Activated CD4-positive, alpha-beta memory T cell treated with anti-CD3 and anti-CD28 coated beads for 36 hours (primary cell): ENCODE measurements at regions of chr1 and their contacts with region 1.

Region 1: DNA sequence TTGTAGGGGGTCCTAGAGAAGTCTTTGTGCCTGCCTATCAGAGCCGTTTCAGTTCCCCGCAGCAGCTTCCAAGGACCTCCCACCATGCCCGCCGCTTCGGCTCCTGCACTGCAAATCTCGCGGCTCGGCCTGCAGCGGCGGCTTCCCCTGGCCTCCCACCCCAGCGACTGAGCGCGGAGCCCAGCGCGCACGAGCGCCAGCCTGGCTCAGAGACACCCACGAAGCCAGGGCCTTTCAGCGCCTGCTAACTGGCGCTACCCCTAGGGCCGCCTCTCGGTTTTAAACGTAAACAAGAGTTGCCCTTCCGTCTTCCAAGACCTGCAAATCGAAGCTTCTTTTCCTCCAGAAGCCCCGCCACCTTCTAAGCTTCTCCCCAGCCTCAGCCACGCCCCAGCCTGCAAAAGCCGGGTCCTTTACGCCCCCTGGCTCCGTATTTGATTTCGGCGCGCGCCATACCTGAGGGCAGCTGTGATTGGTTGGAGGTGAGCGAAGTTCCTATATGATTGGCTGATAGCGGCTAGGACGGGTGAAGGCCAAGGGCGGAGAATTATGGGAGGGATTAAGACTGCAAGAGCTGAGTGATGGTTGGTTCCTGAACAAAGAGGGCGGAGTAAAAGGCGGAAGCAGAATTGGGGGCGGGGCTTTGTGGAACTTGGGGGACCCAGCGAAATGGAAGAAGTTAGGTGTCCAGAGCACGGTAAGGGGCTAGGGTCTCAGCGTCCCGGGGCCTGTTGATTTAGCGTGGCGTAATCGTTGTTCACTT is at the start of gene TTF2:
- DNase-seq: peak; percentile 98
- H3K4me3 Mint-ChIP-seq: no peak within 1 kb of the TSS
- H3K27ac Mint-ChIP-seq: no peak within 1 kb of the TSS
- H3K4me1 Mint-ChIP-seq: peaks cover 40% of the 10 kb centered on the region
- H3K27me3 Mint-ChIP-seq: no peaks in the 10 kb centered on the region
- total RNA-seq, gene TTF2: 102 to 104 TPM

Region 2: DNA sequence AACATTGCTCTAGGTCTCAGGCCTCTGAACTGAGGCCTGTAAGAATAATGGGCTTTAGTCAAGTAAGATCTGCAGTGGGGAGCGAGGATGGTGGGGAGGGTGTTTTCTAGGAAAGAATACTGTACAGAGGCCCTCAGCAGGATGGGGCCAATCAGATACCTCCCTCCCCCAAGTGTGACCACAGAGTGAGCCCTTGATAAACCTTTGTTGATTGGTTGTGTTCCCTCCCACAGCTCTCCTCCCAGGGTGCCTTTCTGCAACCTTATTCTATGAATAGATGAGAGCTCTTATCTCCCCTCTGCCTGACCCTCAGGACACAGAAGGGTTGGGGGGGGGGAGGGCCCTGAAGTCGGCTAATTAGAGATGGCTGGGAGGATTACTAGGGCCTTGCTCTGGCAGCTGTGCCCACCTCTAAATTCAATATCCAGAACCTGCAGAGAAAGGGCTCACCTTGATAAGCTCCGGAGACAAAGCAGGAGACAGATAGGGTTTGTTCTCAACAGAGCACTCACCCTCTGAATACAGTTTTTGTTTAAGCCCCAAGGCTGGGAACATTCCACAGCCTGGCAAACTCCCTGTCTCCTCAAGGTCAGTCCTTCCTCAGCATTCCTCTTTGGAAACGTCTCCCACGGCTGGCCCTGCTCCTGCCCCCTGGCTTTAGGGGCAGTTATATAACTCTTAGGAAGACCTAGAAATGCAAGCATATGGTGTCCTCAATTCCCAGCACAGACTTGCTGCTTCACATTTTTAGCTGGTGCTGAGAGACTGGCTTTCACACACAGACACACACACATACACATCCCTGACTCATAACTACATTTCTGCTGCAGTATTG is 643.9 kb before region 1 on chr1:
- CTCF ChIA-PET with region 1: no interaction called
- POLR2A ChIA-PET with region 1: no interaction called
- intact Hi-C with region 1: no loop called
- DNase-seq: no peak
- H3K4me3 Mint-ChIP-seq: no peak overlapping the region
- H3K27ac Mint-ChIP-seq: no peak overlapping the region
- H3K4me1 Mint-ChIP-seq: peaks cover 33% of the 10 kb centered on the region
- H3K27me3 Mint-ChIP-seq: no peaks in the 10 kb centered on the region

Region 3: DNA sequence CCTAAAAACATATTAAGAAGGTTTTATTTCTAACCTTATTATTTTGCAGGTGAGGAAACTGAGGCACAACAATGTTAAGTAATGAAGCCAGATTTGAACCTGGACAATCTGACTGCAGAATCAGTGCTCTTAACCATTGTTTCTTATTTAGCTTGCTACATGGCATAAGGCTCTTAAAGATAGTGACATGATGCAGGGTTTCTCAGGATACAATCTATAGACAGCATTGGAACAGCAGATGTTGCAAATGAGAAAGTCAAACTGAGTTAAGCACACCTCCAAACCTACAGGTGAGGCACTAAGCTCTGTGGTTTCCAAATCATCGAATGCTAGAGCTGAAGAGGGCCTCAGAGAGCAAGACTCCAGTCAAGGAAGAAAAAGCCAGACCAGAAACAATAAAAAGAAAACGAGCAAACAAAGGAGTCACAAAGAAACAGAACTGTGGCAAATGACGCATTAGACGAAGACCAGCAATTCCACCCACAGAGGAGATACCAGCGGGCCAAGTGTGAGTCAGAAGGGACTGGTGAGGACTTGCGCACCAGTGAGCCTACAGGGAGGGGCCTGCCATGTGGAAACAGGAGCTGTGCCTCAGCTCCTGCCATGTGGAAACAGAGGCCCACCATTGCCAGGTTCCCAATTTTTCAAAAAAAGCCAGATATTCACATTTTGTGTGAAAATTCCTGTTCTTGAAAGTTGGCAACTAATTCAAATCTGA is 503.4 kb before region 1 on chr1:
- CTCF ChIA-PET with region 1: no interaction called
- POLR2A ChIA-PET with region 1: interaction called, 6 read pairs
- intact Hi-C with region 1: loop called (anchors 1 kb)
- DNase-seq: peak; percentile 91
- H3K4me3 Mint-ChIP-seq: peak overlapping the region; percentile 9
- H3K27ac Mint-ChIP-seq: peak overlapping the region; percentile 91
- H3K4me1 Mint-ChIP-seq: peaks cover 80% of the 10 kb centered on the region
- H3K27me3 Mint-ChIP-seq: no peaks in the 10 kb centered on the region

Region 4: DNA sequence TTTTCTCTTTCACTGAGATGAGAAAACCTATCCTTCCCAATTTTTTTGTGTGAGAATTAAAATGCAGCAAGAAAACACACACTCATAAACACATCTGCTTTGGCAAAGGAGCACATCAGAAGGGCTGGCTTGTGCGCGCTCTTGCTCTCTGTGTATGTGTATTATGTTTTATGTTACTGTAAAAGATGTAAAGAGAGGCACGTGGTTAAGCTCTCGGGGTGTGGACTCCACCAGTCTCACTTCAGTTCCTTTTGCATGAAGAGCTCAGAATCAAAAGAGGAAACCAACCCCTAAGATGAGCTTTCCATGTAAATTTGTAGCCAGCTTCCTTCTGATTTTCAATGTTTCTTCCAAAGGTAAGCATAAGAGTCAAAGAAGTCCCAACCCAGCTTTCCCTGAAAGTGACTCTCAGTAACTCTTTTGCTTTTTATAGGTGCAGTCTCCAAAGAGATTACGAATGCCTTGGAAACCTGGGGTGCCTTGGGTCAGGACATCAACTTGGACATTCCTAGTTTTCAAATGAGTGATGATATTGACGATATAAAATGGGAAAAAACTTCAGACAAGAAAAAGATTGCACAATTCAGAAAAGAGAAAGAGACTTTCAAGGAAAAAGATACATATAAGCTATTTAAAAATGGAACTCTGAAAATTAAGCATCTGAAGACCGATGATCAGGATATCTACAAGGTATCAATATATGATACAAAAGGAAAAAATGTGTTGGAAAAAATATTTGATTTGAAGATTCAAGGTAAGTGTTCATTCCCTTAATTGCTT is 305.5 kb before region 1 on chr1 and contains the start of gene CD2:
- CTCF ChIA-PET with region 1: interaction called, 5 read pairs
- POLR2A ChIA-PET with region 1: interaction called, 21 read pairs
- intact Hi-C with region 1: no loop called
- DNase-seq: peak; percentile 78
- H3K4me3 Mint-ChIP-seq: peak within 1 kb of the TSS; percentile 99
- H3K27ac Mint-ChIP-seq: peak within 1 kb of the TSS; percentile 99
- H3K4me1 Mint-ChIP-seq: peaks cover 40% of the 10 kb centered on the region
- H3K27me3 Mint-ChIP-seq: no peaks in the 10 kb centered on the region
- total RNA-seq, gene CD2: 335 to 355 TPM

Region 5: DNA sequence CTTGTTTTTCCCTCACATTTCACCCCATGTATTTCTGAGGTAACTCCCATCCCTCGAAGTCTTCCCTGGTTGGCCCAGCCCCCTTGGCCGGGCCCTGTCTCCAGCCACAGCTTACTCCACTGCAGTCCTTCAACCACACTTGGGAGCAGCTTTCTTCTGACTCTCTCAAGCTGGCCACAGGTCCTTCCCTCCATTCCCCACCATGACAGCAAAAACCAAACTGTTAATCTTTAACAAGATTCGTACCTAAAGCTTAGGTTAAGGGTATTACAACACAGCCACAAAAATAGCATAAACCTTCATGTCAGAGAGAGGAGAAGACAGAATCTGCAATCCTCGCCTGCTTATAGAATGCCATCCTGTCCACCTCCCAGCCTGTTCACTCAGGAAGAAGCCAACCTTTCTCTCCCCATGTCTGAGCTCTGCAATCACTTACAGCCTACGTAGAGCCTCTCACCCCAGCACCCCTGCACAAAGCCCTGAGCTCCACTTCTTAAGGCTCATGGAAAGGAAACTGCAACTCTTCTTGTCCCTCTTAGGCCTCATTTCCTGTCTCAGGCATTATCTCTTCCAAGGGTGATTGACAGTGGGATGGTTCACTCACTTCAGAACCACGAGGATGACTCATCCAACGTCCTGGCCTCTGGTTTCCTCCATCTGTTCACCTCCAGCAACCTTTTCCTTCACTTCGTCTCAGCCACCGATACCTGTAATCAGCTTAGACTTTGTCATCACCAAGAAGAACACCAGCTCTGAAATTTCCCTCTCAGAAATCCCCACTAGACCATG is 232.8 kb before region 1 on chr1:
- CTCF ChIA-PET with region 1: interaction called, 7 read pairs
- POLR2A ChIA-PET with region 1: interaction called, 15 read pairs
- intact Hi-C with region 1: loop called (anchors 1 kb)
- DNase-seq: peak; percentile 90
- H3K4me3 Mint-ChIP-seq: peak overlapping the region; percentile 79
- H3K27ac Mint-ChIP-seq: peak overlapping the region; percentile 91
- H3K4me1 Mint-ChIP-seq: peaks cover 77% of the 10 kb centered on the region
- H3K27me3 Mint-ChIP-seq: no peaks in the 10 kb centered on the region

Region 6: GRCh38 chr1:117077267-117077666 is 17.4 kb after region 1 on chr1:
- CTCF ChIA-PET with region 1: interaction called, 6 read pairs
- POLR2A ChIA-PET with region 1: interaction called, 20 read pairs
- intact Hi-C with region 1: loop called (anchors 1 kb)
- DNase-seq: peak; percentile 79
- H3K4me3 Mint-ChIP-seq: no peak overlapping the region
- H3K27ac Mint-ChIP-seq: peak overlapping the region; percentile 71
- H3K4me1 Mint-ChIP-seq: peaks cover 30% of the 10 kb centered on the region
- H3K27me3 Mint-ChIP-seq: no peaks in the 10 kb centered on the region

Region 7: DNA sequence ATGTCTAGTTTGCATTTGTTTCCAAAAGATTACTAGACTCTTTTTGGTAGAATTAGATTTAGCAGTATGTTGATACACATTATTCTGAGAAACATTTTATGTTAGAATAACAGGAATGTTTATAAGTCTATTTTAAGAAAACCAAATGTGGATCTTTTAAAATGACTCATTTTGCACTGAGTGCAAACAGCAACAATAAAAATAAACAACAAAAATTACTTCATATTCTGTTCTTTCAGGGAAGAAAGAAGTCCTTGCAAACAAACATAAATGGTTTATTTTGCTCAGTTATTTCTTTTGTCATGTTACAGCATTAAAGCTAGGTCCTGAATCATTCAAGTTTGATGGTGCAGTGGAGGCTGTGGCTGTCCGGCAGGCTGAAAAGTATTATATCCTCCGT is 439.2 kb after region 1 on chr1:
- CTCF ChIA-PET with region 1: no interaction called
- POLR2A ChIA-PET with region 1: no interaction called
- intact Hi-C with region 1: no loop called
- DNase-seq: no peak
- H3K4me3 Mint-ChIP-seq: no peak overlapping the region
- H3K27ac Mint-ChIP-seq: no peak overlapping the region
- H3K4me1 Mint-ChIP-seq: no peaks in the 10 kb centered on the region
- H3K27me3 Mint-ChIP-seq: no peaks in the 10 kb centered on the region

Region 8: GRCh38 chr1:117534995-117535467 is 475.2 kb after region 1 on chr1:
- CTCF ChIA-PET with region 1: no interaction called
- POLR2A ChIA-PET with region 1: no interaction called
- intact Hi-C with region 1: loop called (anchors 5 kb)
- DNase-seq: peak; percentile 41
- H3K4me3 Mint-ChIP-seq: no peak overlapping the region
- H3K27ac Mint-ChIP-seq: no peak overlapping the region
- H3K4me1 Mint-ChIP-seq: peaks cover 21% of the 10 kb centered on the region
- H3K27me3 Mint-ChIP-seq: peaks cover 5% of the 10 kb centered on the region